Activated naive CD4-positive, alpha-beta T cell treated with anti-CD3 and anti-CD28 coated beads for 36 hours (primary cell): ENCODE measurements at regions of chr20 and their contacts with region 1.

Region 1: GRCh38 chr20:13784893-13785715 is at the starts of genes ESF1 and NDUFAF5:
- DNase-seq: peak; percentile 96
- H3K4me3 Mint-ChIP-seq: peak within 1 kb of the TSS; percentile 99
- H3K27ac Mint-ChIP-seq: peak within 1 kb of the TSS; percentile 95
- H3K4me1 Mint-ChIP-seq: peaks cover 48% of the 10 kb centered on the region
- H3K27me3 Mint-ChIP-seq: no peaks in the 10 kb centered on the region
- total RNA-seq, gene ESF1: 14.5 TPM
- total RNA-seq, gene NDUFAF5: 27.4 to 28.1 TPM

Region 2: DNA sequence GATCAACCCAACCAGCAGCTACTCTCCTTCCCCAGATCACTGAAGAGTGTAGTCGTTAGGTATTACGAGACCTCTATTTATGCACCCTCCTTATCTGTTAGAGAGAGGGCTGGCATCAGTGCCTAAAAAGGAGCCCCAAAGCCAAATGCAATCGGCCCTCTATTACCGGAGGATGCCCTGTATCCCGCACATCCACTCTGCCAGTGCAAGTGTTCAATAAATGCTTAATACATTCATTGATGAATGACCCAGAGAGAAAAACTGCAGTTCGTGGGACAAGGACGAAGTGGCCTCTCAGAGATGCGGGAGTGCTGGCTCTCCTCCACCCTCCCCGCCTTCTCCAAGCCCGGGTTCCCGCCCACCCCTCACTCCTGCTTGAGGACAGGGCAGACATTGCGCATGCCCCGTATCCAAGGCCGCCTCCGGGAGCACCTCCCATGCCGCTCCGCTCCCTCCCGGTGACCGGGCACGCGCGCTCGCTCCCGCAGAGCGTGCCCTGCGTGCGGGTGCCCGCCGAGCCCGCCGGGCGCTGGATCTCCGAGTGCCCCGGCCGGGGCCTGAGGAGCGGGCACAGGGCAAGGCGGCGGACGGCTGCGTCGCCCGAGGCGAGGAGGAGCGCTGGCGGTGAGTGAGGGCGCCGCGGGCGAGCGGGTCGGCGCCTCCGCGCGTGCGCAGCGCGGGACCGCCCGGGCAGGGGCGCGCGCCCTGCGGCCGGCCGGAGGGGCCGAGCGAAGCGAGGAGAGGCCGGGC is 1894.6 kb before region 1 on chr20:
- CTCF ChIA-PET with region 1: no interaction called
- intact Hi-C with region 1: loop called (anchors 10 kb)
- DNase-seq: peak; percentile 67
- H3K4me3 Mint-ChIP-seq: peak overlapping the region; percentile 73
- H3K27ac Mint-ChIP-seq: peak overlapping the region; percentile 50
- H3K4me1 Mint-ChIP-seq: peaks cover 21% of the 10 kb centered on the region
- H3K27me3 Mint-ChIP-seq: peaks cover 25% of the 10 kb centered on the region

Region 3: GRCh38 chr20:13221673-13222318 is 563.3 kb before region 1 on chr20:
- CTCF ChIA-PET with region 1: no interaction called
- intact Hi-C with region 1: loop called (anchors 2 kb)
- DNase-seq: peak; percentile 65
- H3K4me3 Mint-ChIP-seq: peak overlapping the region; percentile 73
- H3K27ac Mint-ChIP-seq: no peak overlapping the region
- H3K4me1 Mint-ChIP-seq: peaks cover 10% of the 10 kb centered on the region
- H3K27me3 Mint-ChIP-seq: peaks cover 27% of the 10 kb centered on the region

Region 4: DNA sequence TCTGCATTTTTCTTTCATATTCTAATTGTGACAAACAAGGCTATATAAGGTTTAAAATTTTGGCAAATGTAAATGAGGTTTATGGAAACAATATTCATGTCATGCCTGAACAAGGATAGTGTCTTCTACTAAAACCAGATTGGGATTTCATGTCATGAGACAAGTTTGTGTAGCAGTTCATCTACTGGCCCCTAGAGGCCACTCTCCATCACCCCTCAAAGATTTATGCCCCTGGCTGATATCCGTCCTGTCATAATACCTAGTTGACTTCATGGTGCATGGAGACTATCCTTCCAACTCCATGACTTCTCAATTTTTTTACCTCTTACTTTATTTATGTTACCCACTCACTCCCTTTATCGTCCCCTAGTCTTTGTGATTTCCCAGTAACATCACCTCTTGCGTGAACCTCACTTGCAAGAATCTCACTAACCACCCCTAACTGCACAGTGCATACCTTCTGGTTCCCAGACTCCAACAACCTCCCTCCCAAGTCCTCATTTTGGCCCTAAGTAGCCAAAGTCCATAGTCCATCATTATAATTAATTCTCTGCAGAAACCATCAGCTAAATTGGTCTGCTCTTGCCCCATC is 326.1 kb before region 1 on chr20:
- CTCF ChIA-PET with region 1: no interaction called
- intact Hi-C with region 1: loop called (anchors 1 kb)
- DNase-seq: peak; percentile 21
- H3K4me3 Mint-ChIP-seq: no peak overlapping the region
- H3K27ac Mint-ChIP-seq: no peak overlapping the region
- H3K4me1 Mint-ChIP-seq: no peaks in the 10 kb centered on the region
- H3K27me3 Mint-ChIP-seq: no peaks in the 10 kb centered on the region

Region 5: GRCh38 chr20:13771853-13772453 is 13.2 kb before region 1 on chr20:
- CTCF ChIA-PET with region 1: interaction called, 18 read pairs
- intact Hi-C with region 1: loop called (anchors 1 kb)
- DNase-seq: no peak
- H3K4me3 Mint-ChIP-seq: no peak overlapping the region
- H3K27ac Mint-ChIP-seq: no peak overlapping the region
- H3K4me1 Mint-ChIP-seq: peaks cover 18% of the 10 kb centered on the region
- H3K27me3 Mint-ChIP-seq: no peaks in the 10 kb centered on the region

Region 6: DNA sequence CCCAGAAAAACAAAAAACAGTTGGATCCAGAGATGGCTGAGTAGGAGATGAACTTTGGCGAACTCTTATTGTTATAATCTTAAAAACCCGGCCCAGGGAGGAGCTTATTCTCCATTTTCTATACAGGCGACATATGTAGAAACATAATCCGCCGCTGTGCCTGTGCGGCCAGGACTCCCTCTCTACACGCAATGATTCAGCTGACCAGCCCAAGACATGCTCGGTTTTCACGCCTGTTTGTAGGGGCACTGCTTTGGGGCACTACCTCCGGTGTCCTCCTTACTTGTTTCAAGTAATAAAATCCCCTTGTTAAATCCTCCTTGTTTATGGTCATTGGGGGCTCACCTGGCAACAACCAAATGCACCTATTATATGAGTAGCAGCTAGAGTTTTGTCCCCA is 115.4 kb after region 1 on chr20:
- CTCF ChIA-PET with region 1: no interaction called
- intact Hi-C with region 1: no loop called
- DNase-seq: no peak
- H3K4me3 Mint-ChIP-seq: no peak overlapping the region
- H3K27ac Mint-ChIP-seq: no peak overlapping the region
- H3K4me1 Mint-ChIP-seq: no peaks in the 10 kb centered on the region
- H3K27me3 Mint-ChIP-seq: no peaks in the 10 kb centered on the region